ENCODE measurements at regions of chrX and their contacts with region 1.

Region 1: GRCh38 chrX:130190801-130191200 is 19.0 kb downstream of the RAB33A start:
- DNase-seq: no peak
- ATAC-seq: no peak
- H3K4me3 Mint-ChIP-seq: no peak overlapping the region
- H3K27ac Mint-ChIP-seq: no peak overlapping the region
- H3K4me1 Mint-ChIP-seq: peaks cover 19% of the 10 kb centered on the region
- H3K27me3 Mint-ChIP-seq: no peaks in the 10 kb centered on the region

Region 2: DNA sequence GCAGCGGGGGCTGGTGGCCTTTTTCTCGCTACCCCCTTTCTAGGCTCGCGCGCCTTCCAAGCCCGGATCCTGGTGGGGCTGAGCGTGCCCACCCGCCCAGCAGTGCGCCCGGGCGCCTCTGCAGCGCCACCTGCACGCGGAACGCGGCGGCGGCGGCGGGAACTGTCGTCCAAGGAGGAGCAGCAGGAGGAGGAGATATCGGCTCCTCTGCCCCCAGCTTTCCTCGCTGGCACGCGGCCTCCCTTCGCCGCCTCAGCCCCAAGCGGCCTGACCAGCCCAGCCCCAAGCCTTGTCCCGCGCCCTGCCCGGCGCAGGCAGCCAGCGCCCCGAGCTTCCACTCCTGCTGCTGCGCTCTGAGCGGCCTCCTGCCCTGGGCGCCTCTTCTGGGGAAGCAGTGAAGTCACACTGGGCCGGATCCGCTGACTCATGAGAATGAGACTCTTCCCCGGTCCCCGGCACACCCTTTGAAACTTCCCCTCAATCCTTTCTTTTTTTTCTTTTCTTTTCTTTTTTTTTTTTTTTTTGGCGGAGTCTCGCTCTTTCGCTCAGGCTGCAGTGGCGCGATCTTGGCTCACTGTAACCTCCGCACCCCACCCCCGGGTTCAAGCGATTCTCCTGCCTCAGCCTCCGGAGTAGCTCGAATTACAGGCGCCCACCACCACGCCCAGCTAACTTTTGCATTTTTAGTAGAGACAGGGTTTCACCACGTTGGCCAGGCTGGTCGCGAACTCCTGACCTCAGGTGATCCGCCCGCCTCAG is 69.9 kb before region 1 on chrX:
- CTCF ChIA-PET with region 1: interaction called, 10 read pairs
- DNase-seq: peak; percentile 78
- ATAC-seq: peak; percentile 90
- H3K4me3 Mint-ChIP-seq: peak overlapping the region; percentile 67
- H3K27ac Mint-ChIP-seq: peak overlapping the region; percentile 81
- H3K4me1 Mint-ChIP-seq: peaks cover 30% of the 10 kb centered on the region
- H3K27me3 Mint-ChIP-seq: no peaks in the 10 kb centered on the region

Region 3: DNA sequence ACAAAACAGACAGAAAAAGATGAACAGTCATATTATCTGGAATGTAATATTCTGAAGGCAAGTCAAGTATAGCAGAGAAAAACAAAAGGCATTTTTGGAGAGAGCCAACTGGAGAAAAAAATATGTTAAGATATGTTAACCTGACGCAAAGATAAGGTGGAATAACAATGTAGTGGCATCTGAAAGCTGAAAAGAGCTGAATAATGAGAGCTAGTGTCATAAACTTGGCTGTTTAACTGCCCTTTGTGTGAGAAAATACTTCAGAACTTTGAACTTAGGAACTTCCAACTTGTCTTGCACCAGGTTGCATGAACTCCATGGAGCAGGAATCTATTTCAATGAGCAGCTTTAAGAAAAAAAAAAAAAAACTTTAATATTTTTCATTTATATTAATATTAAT is 13.8 kb after region 1 on chrX:
- CTCF ChIA-PET with region 1: no interaction called
- DNase-seq: no peak
- ATAC-seq: no peak
- H3K4me3 Mint-ChIP-seq: no peak overlapping the region
- H3K27ac Mint-ChIP-seq: no peak overlapping the region
- H3K4me1 Mint-ChIP-seq: no peaks in the 10 kb centered on the region
- H3K27me3 Mint-ChIP-seq: no peaks in the 10 kb centered on the region

Measured in activated CD8-positive, alpha-beta memory T cell treated with anti-CD3 and anti-CD28 coated beads, Interleukin-2, amount 10 ng/mL, durations not matched to agents 7 days and 5 days (primary cell).